Psoas muscle (tissue), 8 donors: ENCODE measurements at regions of chr4 and their contacts with region 1.

Region 1: GRCh38 chr4:37909332-37910090 is 18.6 kb downstream of the TBC1D1 start:
- DNase-seq: no peak
- ATAC-seq: peak; percentile 66 to 89 (median 82)
- H3K4me3 ChIP-seq: peak overlapping the region; percentile 19
- H3K27ac ChIP-seq: peak overlapping the region; percentile 60
- H3K4me1 ChIP-seq: peaks cover 24% of the 10 kb centered on the region
- H3K27me3 ChIP-seq: no peaks in the 10 kb centered on the region
- CTCF ChIP-seq: no peak

Region 2: DNA sequence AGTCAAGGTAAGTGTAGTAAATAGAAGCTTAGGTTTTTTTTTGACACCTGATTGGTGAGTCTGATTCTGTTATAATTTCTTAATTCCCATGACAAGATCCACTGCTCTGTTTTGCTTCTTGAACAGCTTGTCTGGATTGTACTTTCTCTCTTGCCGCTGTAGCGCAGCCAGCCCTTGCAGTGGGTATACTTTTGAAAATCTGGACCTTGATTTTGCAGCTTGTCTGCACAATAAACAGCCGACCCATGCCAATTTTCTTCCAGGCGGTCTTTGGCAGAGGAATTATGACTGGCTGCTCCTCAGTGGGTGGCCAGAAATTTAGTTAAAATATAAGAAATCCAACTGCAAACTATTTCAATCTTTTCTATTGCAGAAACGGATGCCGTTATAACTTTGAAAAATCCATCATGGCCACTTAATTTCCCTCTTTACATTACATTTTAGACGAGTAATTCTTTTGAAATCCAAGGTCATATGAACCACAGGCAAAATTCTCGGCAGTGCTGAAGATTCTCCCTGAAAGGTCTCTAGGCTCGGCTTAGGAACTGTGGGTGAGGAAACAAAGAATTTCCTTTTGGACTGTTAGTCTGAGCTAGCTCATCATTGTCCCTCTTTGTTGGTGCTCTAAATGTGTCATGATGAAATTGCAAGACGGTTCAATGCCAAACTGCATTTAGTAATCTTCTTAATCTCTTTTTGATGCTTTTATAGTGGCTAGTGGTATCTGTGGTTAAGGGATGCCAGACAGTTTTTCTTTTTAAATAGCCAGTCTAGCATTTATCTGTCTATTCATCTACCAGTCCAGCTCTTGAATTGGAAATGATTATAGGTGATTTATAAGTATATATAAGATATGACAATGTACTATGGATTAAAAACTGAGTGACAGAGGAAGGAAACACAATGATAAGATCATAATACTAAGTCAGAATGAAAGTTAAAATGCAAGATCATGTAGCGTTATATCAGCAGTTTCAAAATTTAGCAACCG is 19.2 kb after region 1 on chr4:
- intact Hi-C with region 1: loop called in 1 of 2 experiments (anchors 2 kb)
- DNase-seq: no peak
- ATAC-seq: no peak
- H3K4me3 ChIP-seq: no peak overlapping the region
- H3K27ac ChIP-seq: no peak overlapping the region
- H3K4me1 ChIP-seq: peaks cover 30% of the 10 kb centered on the region
- H3K27me3 ChIP-seq: no peaks in the 10 kb centered on the region
- CTCF ChIP-seq: no peak

Region 3: DNA sequence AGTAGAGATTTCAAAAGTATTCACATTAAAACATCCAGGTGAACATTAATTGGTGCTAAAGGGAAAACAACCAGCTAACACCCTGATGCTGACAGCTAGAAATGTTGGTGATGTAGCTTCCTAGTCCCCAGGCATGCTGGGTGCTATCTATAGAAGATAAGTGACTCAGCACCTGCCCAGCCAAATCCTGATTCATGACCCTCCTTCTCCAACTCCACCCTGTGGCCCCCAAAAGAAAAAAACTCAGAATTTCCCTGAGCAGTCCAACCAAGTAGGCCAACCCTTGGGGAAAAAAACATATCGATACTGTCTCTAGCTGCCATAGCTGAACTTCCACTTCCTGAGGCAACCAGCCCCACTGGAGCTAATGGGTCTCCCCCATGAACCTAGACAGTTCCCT is 556.9 kb after region 1 on chr4:
- intact Hi-C with region 1: no loop called
- DNase-seq: no peak
- ATAC-seq: no peak
- H3K4me3 ChIP-seq: no peak overlapping the region
- H3K27ac ChIP-seq: no peak overlapping the region
- H3K4me1 ChIP-seq: no peaks in the 10 kb centered on the region
- H3K27me3 ChIP-seq: no peaks in the 10 kb centered on the region
- CTCF ChIP-seq: no peak